PC-3 (cell line): ENCODE measurements at regions of chr4 and their contacts with region 1.

Region 1: GRCh38 chr4:165006456-165006855 is 25.3 kb upstream of the TRIM60 start:
- DNase-seq: no peak
- ATAC-seq: no peak
- H3K4me3 ChIP-seq: no peak overlapping the region
- H3K27ac ChIP-seq: no peak overlapping the region
- H3K4me1 ChIP-seq: no peaks in the 10 kb centered on the region
- H3K27me3 ChIP-seq: peaks cover 14% of the 10 kb centered on the region
- CTCF ChIP-seq: no peak

Region 2: DNA sequence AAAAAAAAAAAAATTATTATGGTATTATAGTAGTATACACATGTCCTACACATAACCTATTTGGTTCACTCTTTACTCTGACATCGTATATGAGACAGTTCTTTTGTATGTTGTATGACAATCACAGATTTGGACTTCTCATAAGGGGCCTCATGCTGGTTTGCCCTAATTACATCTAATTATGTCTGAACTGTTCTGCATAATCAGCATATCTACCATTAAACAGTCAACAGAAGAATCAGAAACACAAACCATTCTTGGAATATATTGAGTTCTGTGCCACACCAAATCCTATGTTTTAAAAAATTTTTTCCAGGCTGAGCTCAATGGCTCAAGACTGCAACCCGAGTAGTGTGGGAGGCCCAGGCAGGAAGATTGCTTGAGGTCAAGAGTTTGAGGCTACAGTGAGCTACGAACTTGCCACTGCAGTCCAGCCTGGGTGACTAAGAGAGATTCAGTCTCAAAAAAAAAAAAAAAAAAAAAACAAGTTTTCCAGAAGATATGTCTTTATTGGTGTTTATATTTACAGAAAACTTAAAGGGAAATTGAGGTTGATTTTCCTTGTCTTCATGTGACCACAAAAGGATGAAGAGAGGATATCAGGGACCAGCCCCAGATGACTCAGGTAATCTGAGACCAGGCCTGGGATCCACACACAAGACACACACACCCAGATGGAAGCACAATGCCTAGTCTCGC is 51.2 kb before region 1 on chr4:
- CTCF ChIA-PET with region 1: interaction called, 10 read pairs
- POLR2A ChIA-PET with region 1: no interaction called
- intact Hi-C with region 1: no loop called
- DNase-seq: peak; percentile 27
- ATAC-seq: no peak
- H3K4me3 ChIP-seq: no peak overlapping the region
- H3K27ac ChIP-seq: no peak overlapping the region
- H3K4me1 ChIP-seq: peaks cover 3% of the 10 kb centered on the region; the same call in 1 of the 2 replicates
- H3K27me3 ChIP-seq: no peaks in the 10 kb centered on the region
- CTCF ChIP-seq: no peak

Region 3: DNA sequence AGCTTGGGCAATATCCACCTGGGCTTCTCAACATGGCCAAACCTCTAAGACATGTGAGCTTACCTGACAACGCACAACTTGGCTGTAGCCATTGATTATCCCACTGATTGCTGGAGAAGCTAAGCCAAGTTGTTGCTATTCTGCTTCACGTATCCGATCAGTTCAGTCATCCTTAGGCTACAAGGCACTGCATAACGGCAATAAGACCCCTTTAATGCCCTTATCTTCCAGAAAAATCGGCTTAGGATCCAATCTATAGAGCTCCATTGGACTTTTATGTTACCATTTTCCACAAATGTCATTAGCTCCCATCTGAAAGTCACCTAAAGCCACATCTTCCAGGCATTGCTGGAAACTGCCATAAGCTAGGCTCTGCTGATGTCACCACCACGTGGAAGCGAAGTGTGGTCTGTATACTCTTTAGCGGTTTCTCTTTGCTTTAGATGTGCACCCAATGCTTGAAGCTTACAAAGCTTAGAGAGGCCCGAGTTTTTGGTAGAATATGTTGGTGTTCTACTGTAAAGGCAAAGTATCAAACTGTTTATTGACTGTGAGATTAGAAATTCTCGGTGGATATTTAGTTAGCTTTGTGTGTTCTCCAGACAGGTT is 535.5 kb after region 1 on chr4:
- CTCF ChIA-PET with region 1: no interaction called
- POLR2A ChIA-PET with region 1: no interaction called
- intact Hi-C with region 1: no loop called
- DNase-seq: no peak
- ATAC-seq: no peak
- H3K4me3 ChIP-seq: no peak overlapping the region
- H3K27ac ChIP-seq: no peak overlapping the region
- H3K4me1 ChIP-seq: no peaks in the 10 kb centered on the region
- H3K27me3 ChIP-seq: no peaks in the 10 kb centered on the region
- CTCF ChIP-seq: no peak

Region 4: GRCh38 chr4:165828928-165829327 is 822.5 kb after region 1 on chr4:
- CTCF ChIA-PET with region 1: no interaction called
- POLR2A ChIA-PET with region 1: no interaction called
- intact Hi-C with region 1: no loop called
- DNase-seq: no peak
- ATAC-seq: no peak
- H3K4me3 ChIP-seq: no peak overlapping the region
- H3K27ac ChIP-seq: no peak overlapping the region
- H3K4me1 ChIP-seq: peaks cover 11% of the 10 kb centered on the region; the same call in 1 of the 2 replicates
- H3K27me3 ChIP-seq: no peaks in the 10 kb centered on the region
- CTCF ChIP-seq: no peak